Activated naive CD4-positive, alpha-beta T cell treated with anti-CD3 and anti-CD28 coated beads for 36 hours (primary cell): ENCODE measurements at regions of chr13 and their contacts with region 1.

Region 1: GRCh38 chr13:19633479-19634255 is at the start of gene MPHOSPH8:
- DNase-seq: peak; percentile 94
- H3K4me3 Mint-ChIP-seq: peak within 1 kb of the TSS; percentile 100
- H3K27ac Mint-ChIP-seq: peak within 1 kb of the TSS; percentile 98
- H3K4me1 Mint-ChIP-seq: peaks cover 32% of the 10 kb centered on the region
- H3K27me3 Mint-ChIP-seq: no peaks in the 10 kb centered on the region
- total RNA-seq, gene MPHOSPH8: 20.6 to 21.5 TPM

Region 2: DNA sequence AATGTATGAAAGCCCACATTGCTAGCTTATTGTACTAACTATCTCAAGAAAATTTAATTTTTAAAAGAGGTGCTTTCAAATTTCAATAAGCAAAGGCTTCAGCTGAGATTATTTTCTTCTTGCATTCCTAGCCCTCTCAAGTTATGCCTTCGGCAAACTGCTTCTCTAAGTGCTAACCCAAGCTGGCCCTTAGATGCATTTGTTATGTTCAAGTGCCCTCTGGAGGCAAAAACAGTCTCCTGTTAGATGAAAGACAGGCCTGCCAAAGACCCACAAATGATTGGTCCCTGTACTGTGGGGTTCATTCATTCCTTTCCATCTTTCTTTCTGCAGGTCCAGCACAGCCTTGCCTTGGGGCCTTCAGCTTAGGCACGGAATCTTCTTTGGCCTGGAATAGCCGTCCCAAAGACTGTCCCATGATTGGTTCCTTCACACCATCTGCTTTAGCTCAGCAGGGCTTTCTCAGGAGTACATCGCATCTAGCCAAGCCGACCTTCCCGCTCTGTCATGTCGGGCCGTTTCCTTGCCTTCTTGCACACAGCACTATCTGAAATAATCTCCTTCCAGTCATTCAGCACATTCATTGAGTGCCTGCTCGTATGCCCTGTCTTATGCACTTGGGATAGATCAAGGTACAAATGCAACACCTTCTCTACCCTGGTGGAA is 45.9 kb before region 1 on chr13:
- CTCF ChIA-PET with region 1: interaction called, 5 read pairs
- intact Hi-C with region 1: loop called (anchors 1 kb)
- DNase-seq: peak; percentile 58
- H3K4me3 Mint-ChIP-seq: peak overlapping the region; percentile 75
- H3K27ac Mint-ChIP-seq: peak overlapping the region; percentile 93
- H3K4me1 Mint-ChIP-seq: peaks cover 17% of the 10 kb centered on the region
- H3K27me3 Mint-ChIP-seq: no peaks in the 10 kb centered on the region

Region 3: GRCh38 chr13:19713186-19713965 is 79.7 kb after region 1 on chr13:
- CTCF ChIA-PET with region 1: no interaction called
- intact Hi-C with region 1: loop called (anchors 5 kb)
- DNase-seq: peak; percentile 32
- H3K4me3 Mint-ChIP-seq: no peak overlapping the region
- H3K27ac Mint-ChIP-seq: no peak overlapping the region
- H3K4me1 Mint-ChIP-seq: peaks cover 21% of the 10 kb centered on the region
- H3K27me3 Mint-ChIP-seq: no peaks in the 10 kb centered on the region

Region 4: DNA sequence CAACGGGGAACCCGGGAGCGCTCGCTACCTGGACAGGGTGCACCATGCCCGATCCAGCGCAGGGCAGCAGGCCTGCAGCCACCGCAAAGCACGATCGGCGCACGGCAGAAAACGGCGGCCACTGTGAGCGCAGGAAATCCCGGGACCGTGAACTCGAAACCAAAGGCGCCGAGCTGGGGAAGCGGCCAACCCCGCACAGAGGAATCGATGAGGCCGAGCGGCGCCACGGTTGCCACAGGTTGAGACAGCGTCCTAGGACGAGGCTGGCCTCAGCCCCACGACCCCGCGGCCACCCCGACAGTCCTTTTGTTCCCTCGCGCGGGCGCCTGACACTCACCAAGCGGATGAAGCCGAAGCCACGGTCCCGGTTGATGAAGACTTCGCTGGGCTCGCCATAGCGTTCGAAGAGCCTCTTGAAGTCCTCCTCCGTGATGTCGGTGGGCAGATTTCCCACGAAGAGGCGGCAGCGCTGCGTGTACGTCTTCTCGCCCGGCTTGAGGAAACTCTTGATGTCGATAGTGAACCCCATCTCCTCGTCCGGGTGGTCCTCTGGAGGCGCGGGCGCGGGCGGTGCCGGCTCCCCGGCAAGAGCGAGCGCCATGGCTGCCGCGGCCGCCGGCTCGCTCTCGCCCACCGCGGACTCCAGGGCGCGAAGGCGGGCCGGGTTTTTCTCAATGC is 148.5 kb after region 1 on chr13:
- CTCF ChIA-PET with region 1: no interaction called
- intact Hi-C with region 1: loop called (anchors 1 kb)
- DNase-seq: peak; percentile 74
- H3K4me3 Mint-ChIP-seq: peak overlapping the region; percentile 96
- H3K27ac Mint-ChIP-seq: peak overlapping the region; percentile 98
- H3K4me1 Mint-ChIP-seq: peaks cover 7% of the 10 kb centered on the region
- H3K27me3 Mint-ChIP-seq: peaks cover 3% of the 10 kb centered on the region